ENCODE measurements at regions of chr11 and their contacts with region 1.

Region 1: DNA sequence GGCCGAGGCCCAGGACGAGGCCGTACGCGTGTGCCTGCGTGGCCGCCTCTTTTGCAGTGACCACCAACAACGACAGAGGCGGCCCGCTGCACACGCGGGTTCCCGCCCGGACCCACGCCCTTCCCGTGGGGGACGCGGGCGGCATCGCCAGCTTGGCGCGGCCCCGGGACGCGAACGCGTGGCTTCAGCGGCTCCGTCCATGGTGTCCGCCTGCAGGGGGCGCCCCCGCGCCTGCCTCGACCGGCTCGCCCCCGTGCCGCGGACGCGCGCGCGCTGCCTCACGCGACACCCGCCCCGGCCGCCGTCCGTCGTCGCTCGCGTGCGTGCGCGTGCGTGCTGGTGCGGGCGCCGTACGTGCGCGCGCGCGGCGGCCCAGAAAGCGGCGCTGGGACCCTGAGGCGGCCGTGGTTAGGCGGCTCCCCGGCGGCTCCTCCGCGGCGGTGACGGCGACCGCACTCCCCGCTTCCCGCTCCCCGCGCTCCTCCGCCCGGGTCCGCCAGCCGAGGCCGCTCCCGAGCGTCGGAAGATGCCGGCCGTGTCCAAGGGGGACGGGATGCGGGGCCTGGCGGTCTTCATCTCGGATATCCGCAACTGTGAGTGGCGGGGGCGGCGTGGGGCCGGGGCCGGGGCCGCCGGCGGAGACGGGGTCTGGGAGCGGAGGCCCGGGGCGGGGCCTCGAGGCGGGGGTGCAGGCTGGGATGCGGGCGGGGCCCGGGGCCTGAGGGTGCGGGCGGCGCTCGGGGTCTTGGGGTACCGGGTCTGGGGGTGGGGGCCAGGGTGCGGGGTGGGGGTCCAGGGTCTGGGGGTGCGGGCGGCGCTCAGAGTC is at the start of gene AP2A2:
- DNase-seq: peak; percentile 99
- ATAC-seq: peak; percentile 63
- H3K4me3 Mint-ChIP-seq: peak within 1 kb of the TSS; percentile 86
- H3K27ac Mint-ChIP-seq: peak within 1 kb of the TSS; percentile 84
- H3K4me1 Mint-ChIP-seq: peaks cover 25% of the 10 kb centered on the region
- H3K27me3 Mint-ChIP-seq: no peaks in the 10 kb centered on the region
- total RNA-seq, gene AP2A2: 49.1 to 52.1 TPM

Region 2: DNA sequence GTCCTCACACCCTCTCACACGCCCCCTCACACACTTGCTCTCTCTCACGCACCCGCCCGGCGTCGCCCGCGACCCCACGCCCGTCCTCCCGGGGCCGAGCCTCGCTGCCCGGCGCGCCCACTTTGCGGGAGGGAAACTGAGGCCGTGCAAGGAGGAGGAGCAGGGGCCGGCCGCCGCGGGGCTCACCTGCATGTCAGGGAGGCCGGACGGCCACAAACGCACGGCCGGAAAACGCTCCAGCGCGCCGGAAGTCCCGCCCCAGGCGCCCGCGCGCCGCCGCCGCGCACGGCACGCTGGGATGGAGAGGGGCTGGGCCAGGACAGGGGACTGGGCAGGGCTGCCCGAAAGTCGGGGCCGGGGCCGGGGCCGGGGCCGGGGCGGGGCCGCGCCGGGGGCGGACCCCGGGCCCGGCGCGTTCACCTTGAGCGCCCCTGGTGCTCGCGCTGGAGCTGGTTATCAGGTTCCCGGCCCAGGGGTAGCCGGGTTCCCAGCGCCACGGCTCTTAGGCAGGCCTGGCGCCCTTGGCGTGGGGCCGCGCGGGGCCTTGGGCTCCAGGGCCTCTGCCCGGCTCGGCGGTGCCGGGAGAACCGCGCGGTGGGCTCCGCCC is 15.0 kb before region 1 on chr11 and contains the start of gene CHID1:
- POLR2A ChIA-PET with region 1: interaction called, 10 read pairs
- DNase-seq: peak; percentile 91
- ATAC-seq: peak; percentile 92
- H3K4me3 Mint-ChIP-seq: peak within 1 kb of the TSS; percentile 95
- H3K27ac Mint-ChIP-seq: peak within 1 kb of the TSS; percentile 90
- H3K4me1 Mint-ChIP-seq: peaks cover 14% of the 10 kb centered on the region
- H3K27me3 Mint-ChIP-seq: no peaks in the 10 kb centered on the region
- total RNA-seq, gene CHID1: 39.7 to 47.9 TPM

Region 3: GRCh38 chr11:1233331-1233715 is 307.6 kb after region 1 on chr11:
- POLR2A ChIA-PET with region 1: no interaction called
- DNase-seq: no peak
- ATAC-seq: no peak
- H3K4me3 Mint-ChIP-seq: no peak overlapping the region
- H3K27ac Mint-ChIP-seq: no peak overlapping the region
- H3K4me1 Mint-ChIP-seq: no peaks in the 10 kb centered on the region
- H3K27me3 Mint-ChIP-seq: no peaks in the 10 kb centered on the region

Measured in activated naive CD8-positive, alpha-beta T cell treated with anti-CD3 and anti-CD28 coated beads, Interleukin-2, amount 10 ng/mL, durations not matched to agents 7 days and 5 days (primary cell).